HepG2 (cell line): ENCODE measurements at regions of chr5 and their contacts with region 1.

Region 1: GRCh38 chr5:154857530-154858296 is 714 bp upstream of the CNOT8 start:
- DNase-seq: peak; percentile 93
- ATAC-seq: peak; percentile 89
- H3K4me3 ChIP-seq: peak overlapping the region; percentile 78 to 93 (median 85)
- H3K27ac ChIP-seq: peak overlapping the region; percentile 99
- H3K4me1 ChIP-seq: peaks cover 34% of the 10 kb centered on the region
- H3K27me3 ChIP-seq: peaks cover 0 to 4% of the 10 kb centered on the region in 2 experiments; a peak in 1 of 5 replicates
- CTCF ChIP-seq: peak; percentile 56
- EP300 ChIP-seq: no peak; a peak in 1 of 4 replicates
- POLR2A ChIP-seq: peak in 1 of 2 experiments; percentile 72
- RAD21 ChIP-seq: peak; percentile 23; the same call in 1 of the 2 replicates

Region 2: GRCh38 chr5:154654486-154655371 is 203.0 kb before region 1 on chr5:
- CTCF ChIA-PET with region 1: no interaction called
- POLR2A ChIA-PET with region 1: no interaction called
- in situ Hi-C with region 1: no loop called
- intact Hi-C with region 1: loop called (anchors 5 kb)
- DNase-seq: no peak
- ATAC-seq: no peak
- H3K4me3 ChIP-seq: no peak overlapping the region
- H3K27ac ChIP-seq: peak overlapping the region; percentile 56
- H3K4me1 ChIP-seq: peaks cover 31% of the 10 kb centered on the region
- H3K27me3 ChIP-seq: no peaks in the 10 kb centered on the region
- CTCF ChIP-seq: no peak
- EP300 ChIP-seq: no peak
- POLR2A ChIP-seq: no peak
- RAD21 ChIP-seq: no peak

Region 3: DNA sequence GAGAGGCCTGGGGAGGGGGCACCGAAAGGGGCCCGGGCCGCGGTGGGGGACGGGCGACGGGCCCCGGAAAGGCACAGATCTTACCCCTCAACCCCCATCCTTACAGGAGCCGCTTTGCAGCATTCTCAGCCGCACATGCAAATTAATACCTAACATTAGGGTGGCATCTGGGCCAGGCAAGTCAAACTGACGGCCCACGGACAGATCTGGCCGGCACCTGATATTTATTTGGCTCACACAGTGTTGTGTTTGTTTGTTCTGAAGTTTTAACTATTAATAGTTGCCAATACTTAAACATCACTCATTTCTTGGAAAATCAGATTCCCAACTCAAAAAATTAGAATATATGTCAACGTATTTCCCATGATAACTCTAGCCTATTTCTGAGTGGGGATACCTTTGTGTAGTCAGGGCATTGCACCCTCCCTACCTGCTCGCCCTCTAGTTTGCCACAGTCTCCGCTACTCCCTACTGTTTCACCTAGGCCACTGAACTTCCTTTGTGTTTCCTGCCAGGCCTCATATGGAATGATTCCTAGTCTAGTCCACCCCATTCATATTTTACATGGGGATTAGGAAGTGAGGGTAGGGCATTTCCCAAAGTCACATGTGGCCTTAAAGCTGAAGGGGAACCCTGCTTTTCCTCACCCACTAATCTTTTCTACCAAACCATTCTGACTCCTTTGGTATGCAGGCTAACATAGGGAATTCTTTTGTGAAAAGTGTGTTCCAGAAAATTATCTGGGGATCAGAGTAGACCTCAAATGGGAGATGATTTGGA is 174.4 kb before region 1 on chr5:
- CTCF ChIA-PET with region 1: no interaction called
- POLR2A ChIA-PET with region 1: interaction called, 9 read pairs
- in situ Hi-C with region 1: no loop called
- intact Hi-C with region 1: loop called (anchors 1 kb)
- DNase-seq: no peak
- ATAC-seq: peak; percentile 34; the same call in 2 of the 3 replicates
- H3K4me3 ChIP-seq: peak overlapping the region; percentile 59 to 67 (median 66)
- H3K27ac ChIP-seq: peak overlapping the region; percentile 74
- H3K4me1 ChIP-seq: peaks cover 55% of the 10 kb centered on the region
- H3K27me3 ChIP-seq: no peaks in the 10 kb centered on the region
- CTCF ChIP-seq: no peak
- EP300 ChIP-seq: no peak
- POLR2A ChIP-seq: no peak
- RAD21 ChIP-seq: no peak

Region 4: DNA sequence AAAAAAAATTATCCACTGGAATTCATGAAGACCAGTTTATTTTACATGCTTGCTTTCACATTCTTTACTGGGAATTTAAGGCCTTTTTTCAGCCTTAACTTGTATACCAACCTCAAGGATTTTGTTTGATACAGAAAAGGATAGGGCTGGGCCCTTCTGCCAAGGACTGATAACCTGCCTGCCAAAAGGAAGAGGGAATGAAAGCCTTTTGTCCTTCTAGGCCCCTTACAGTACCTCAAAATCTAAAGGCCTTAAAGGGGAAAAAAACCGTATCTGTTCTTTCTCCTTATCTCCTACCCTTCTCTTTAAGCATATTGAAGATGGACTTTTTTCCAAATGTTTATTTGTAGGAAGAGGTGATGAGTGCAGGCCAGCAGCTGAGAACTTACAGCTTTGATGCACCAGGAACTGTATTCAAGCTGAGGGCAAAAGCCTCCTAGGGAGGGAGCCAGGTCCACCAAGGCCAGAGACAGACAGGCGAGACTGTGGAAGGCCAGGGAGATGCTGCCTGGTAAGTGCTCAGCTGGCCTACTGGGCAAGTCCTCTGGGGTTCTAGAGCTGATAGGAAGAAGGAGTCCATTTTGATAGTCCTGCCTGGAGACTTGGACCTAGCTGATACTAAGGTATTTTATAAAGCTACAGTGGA is 39.1 kb before region 1 on chr5:
- CTCF ChIA-PET with region 1: no interaction called
- POLR2A ChIA-PET with region 1: interaction called, 3 read pairs
- in situ Hi-C with region 1: no loop called
- intact Hi-C with region 1: loop called (anchors 5 kb)
- DNase-seq: no peak
- ATAC-seq: no peak
- H3K4me3 ChIP-seq: no peak overlapping the region
- H3K27ac ChIP-seq: no peak overlapping the region
- H3K4me1 ChIP-seq: peaks cover 39% of the 10 kb centered on the region
- H3K27me3 ChIP-seq: no peaks in the 10 kb centered on the region
- CTCF ChIP-seq: no peak
- EP300 ChIP-seq: no peak
- POLR2A ChIP-seq: 0 out of 4 replicates have a peak, but pooled peaks of 1 of the 2 experiments have one; percentile 19
- RAD21 ChIP-seq: no peak

Region 5: GRCh38 chr5:154834053-154834452 is 23.7 kb before region 1 on chr5:
- CTCF ChIA-PET with region 1: no interaction called
- POLR2A ChIA-PET with region 1: interaction called, 13 read pairs
- in situ Hi-C with region 1: no loop called
- intact Hi-C with region 1: no loop called
- DNase-seq: peak; percentile 68
- ATAC-seq: peak; percentile 68
- H3K4me3 ChIP-seq: peak overlapping the region in 2 of 3 experiments; percentile 22 to 49; a peak in 2 of 6 replicates
- H3K27ac ChIP-seq: peak overlapping the region; percentile 48
- H3K4me1 ChIP-seq: peaks cover 85% of the 10 kb centered on the region
- H3K27me3 ChIP-seq: no peaks in the 10 kb centered on the region
- CTCF ChIP-seq: no peak
- EP300 ChIP-seq: peak in 1 of 2 experiments; percentile 87; a peak in 2 of 4 replicates
- POLR2A ChIP-seq: no peak
- RAD21 ChIP-seq: no peak

Region 6: GRCh38 chr5:154840435-154841272 is 17.1 kb before region 1 on chr5:
- CTCF ChIA-PET with region 1: no interaction called
- POLR2A ChIA-PET with region 1: interaction called, 35 read pairs
- in situ Hi-C with region 1: no loop called
- intact Hi-C with region 1: no loop called
- DNase-seq: no peak
- ATAC-seq: no peak
- H3K4me3 ChIP-seq: no peak overlapping the region
- H3K27ac ChIP-seq: no peak overlapping the region
- H3K4me1 ChIP-seq: peaks cover 89% of the 10 kb centered on the region
- H3K27me3 ChIP-seq: no peaks in the 10 kb centered on the region
- CTCF ChIP-seq: no peak
- EP300 ChIP-seq: no peak
- POLR2A ChIP-seq: no peak
- RAD21 ChIP-seq: no peak

Region 7: DNA sequence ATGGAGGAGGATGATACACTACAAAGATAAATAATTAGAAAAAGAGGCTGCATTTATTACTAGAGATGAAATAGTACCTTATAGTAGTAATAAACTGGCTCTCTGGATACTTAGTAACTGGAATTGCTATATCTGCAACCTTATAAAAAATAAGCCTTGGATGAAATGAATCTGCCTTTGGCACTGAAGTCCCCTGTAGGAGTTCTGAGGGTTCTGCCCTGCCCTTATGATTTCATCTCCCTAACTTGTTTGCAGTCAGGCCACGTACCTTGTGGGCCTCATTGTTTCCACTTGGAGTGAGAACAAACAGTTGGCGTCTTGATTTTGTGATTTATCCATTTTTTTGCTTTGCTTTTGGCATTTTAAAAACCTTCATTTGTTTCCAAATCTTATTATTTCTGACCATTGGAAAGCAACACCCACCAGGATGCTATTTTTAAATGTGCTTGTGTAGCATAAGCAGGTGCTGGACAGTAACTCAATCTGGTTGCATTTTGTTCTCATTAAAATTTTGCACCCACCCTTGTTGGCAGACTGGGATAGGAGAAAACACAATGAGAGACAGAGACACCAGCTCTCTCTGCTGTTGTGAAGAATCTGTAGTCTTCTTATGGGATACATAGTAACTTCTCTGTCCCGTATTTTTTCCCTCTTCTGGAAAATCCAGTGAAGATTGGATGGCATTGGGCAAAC is 950.3 kb after region 1 on chr5:
- CTCF ChIA-PET with region 1: no interaction called
- POLR2A ChIA-PET with region 1: no interaction called
- in situ Hi-C with region 1: no loop called
- intact Hi-C with region 1: no loop called
- DNase-seq: no peak
- ATAC-seq: no peak
- H3K4me3 ChIP-seq: no peak overlapping the region
- H3K27ac ChIP-seq: no peak overlapping the region
- H3K4me1 ChIP-seq: no peaks in the 10 kb centered on the region
- H3K27me3 ChIP-seq: no peaks in the 10 kb centered on the region
- CTCF ChIP-seq: no peak
- EP300 ChIP-seq: no peak
- POLR2A ChIP-seq: no peak
- RAD21 ChIP-seq: no peak